AG04450 (cell line): ENCODE measurements at regions of chr4 and their contacts with region 1.

Region 1: GRCh38 chr4:88761861-88762508 is 64.4 kb upstream of the NAP1L5 start:
- DNase-seq: no peak
- H3K4me3 ChIP-seq: no peak overlapping the region
- H3K27ac ChIP-seq: no peak overlapping the region
- H3K27me3 ChIP-seq: no peaks in the 10 kb centered on the region
- CTCF ChIP-seq: no peak

Region 2: GRCh38 chr4:88690355-88690754 is 71.6 kb before region 1 on chr4:
- CTCF ChIA-PET with region 1: no interaction called
- POLR2A ChIA-PET with region 1: interaction called, 12 read pairs
- DNase-seq: no peak
- H3K4me3 ChIP-seq: no peak overlapping the region
- H3K27ac ChIP-seq: no peak overlapping the region
- H3K27me3 ChIP-seq: no peaks in the 10 kb centered on the region
- CTCF ChIP-seq: no peak